Motor neuron (in vitro differentiated cells): ENCODE measurements at regions of chr7 and their contacts with region 1.

Region 1: GRCh38 chr7:116180302-116180701 is 30.0 kb upstream of the TES start:
- ATAC-seq: peak in 3 of 8 experiments; percentile 73 to 75 (median 73)
- H3K4me3 ChIP-seq: no peak overlapping the region
- H3K27ac ChIP-seq: no peak overlapping the region
- H3K4me1 ChIP-seq: no peaks in the 10 kb centered on the region

Region 2: GRCh38 chr7:116236020-116236630 is 55.8 kb after region 1 on chr7:
- in situ Hi-C with region 1: loop called in 2 of 9 experiments (anchors 5 to 10 kb)
- ATAC-seq: peak in 2 of 8 experiments; percentile 46 to 48
- H3K4me3 ChIP-seq: no peak overlapping the region
- H3K27ac ChIP-seq: no peak overlapping the region
- H3K4me1 ChIP-seq: peaks cover 2 to 10% of the 10 kb centered on the region in 2 donors